IMR-90 (cell line): ENCODE measurements at regions of chr6 and their contacts with region 1.

Region 1: DNA sequence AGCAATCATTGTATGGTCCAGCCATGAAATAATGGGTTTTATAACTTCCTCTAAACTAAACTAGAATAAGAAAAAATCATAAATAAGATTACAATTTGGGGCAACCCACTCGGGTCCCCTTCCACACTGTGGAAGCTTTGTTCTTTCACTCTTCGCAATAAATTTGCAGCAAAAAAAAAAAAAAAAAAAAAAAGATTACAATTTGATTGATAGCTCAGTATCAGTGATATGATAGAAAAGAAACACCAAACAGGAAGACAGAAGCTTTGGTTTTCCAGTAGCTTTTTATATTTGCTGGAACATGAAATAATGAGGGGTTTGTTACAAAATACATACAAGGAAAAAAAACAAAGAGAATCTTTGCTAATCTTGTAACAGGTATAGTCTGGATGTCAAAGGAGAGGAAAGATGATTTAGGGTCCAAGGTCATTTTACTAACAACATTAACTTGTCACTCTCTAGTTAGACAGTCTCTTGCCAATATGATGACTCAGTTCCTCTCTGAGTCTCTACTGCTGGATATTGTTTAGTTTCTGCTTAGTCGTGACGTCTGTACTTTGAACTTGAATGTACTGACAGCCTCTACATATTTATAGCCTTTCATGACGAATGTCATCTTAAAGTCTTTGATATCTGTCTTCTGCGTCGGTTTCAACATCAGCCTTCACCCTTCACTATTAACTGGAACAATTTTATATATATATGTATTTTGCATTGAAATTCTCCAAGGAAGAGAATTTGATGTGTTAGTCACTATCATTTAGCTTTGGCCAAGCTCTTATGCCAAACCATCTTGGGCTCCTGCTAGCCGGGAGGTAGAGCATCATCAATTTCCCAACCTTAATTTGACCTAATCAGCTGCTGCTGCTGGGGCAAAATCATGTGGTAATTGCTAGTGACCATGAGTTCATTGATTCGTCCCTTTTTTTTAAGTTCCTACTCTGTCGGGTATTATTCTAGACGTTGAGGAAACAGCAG is 213.1 kb upstream of the STXBP5 start:
- DNase-seq: peak; percentile 82
- ATAC-seq: peak; percentile 70
- H3K4me3 ChIP-seq: no peak overlapping the region
- H3K27ac ChIP-seq: no peak overlapping the region
- H3K4me1 ChIP-seq: peaks cover 4% of the 10 kb centered on the region; the same call in 1 of the 2 replicates
- H3K27me3 ChIP-seq: no peaks in the 10 kb centered on the region
- CTCF ChIP-seq: no peak
- POLR2A ChIP-seq: no peak
- RAD21 ChIP-seq: no peak

Region 2: GRCh38 chr6:147216915-147217314 is 225.8 kb after region 1 on chr6:
- CTCF ChIA-PET with region 1: no interaction called
- POLR2A ChIA-PET with region 1: interaction called, 10 read pairs
- dilution Hi-C with region 1: no loop called
- in situ Hi-C with region 1: no loop called
- intact Hi-C with region 1: no loop called
- DNase-seq: no peak
- ATAC-seq: no peak
- H3K4me3 ChIP-seq: no peak overlapping the region
- H3K27ac ChIP-seq: no peak overlapping the region
- H3K4me1 ChIP-seq: peaks cover 1% of the 10 kb centered on the region
- H3K27me3 ChIP-seq: no peaks in the 10 kb centered on the region
- CTCF ChIP-seq: no peak
- POLR2A ChIP-seq: no peak
- RAD21 ChIP-seq: no peak